Posterior vena cava (tissue), 2 donors: ENCODE measurements at regions of chr13 and their contacts with region 1.

Region 1: GRCh38 chr13:52760077-52760476 is 20.5 kb upstream of the CNMD start:
- DNase-seq: no peak

Region 2: DNA sequence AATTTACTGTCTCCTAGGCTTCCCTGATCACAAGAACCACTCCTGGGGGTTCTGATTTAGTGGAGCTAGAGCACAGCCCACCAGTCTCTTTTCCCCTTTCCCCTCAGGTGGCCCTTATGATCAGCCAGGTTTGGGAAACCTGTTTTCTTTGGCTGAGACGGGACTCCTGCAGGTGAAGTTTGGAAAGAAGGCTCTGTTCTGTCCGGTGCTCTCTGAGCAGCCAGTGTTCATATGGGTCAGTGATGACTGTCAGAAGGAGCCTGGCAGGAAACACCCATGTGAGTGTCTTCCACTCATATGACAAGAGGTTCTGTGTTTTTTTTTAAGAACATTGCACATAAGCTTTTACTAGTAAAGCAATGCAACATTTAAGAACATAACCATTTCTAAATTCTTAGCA is 25.0 kb before region 1 on chr13:
- intact Hi-C with region 1: loop called in 1 of 2 experiments (anchors 1 kb)
- DNase-seq: no peak